CD8-positive, alpha-beta T cell (primary cell): ENCODE measurements at regions of chr1 and their contacts with region 1.

Region 1: DNA sequence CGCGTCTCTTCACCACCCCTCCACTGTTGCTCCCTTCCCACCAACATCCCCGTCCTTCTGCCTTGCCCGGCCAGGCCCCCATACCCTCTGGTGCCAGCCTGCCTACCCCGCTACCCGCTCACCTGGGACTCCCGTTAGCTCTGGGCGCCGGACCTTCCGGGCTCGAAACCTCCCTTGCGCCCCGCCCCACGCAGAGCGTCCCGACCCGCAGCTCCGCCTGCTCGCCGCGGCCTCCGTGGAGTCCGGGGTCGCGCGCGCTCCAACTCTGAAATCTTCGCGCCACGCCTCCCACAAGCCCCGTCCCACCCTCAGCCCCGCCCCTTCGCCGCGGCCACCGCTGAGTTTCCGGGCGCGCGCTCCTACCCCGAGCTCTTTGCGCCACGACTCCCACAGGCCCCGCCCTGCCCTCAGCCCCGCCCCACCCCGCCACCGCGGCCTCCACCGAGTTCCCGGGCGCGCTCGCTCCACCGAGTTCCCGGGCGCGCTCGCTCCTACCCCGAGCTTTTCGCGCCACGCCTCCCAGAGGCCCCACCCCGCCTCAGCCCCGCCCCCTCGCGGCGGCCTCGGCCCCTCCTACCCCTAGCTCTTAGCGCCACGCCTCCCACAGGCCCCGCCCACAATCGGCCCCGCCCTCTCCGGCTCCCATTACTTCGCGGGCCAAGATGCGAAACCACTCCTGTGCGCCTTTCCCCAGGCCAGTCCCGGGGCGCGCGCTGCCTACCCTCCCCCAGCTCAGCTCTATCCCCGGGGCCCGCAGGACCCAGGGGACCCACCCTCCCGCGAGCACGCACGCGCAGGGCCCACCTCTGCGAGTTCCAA is at the start of gene IFT25:
- DNase-seq: peak; percentile 96 to 100 (median 98)
- ATAC-seq: peak; percentile 81
- H3K4me3 ChIP-seq: peak within 1 kb of the TSS; percentile 81 to 94
- H3K4me3 Mint-ChIP-seq: peak within 1 kb of the TSS; percentile 98
- H3K27ac ChIP-seq: peak within 1 kb of the TSS; percentile 58 to 88
- H3K27ac Mint-ChIP-seq: peak within 1 kb of the TSS; percentile 96
- H3K4me1 ChIP-seq: peaks cover 27% of the 10 kb centered on the region
- H3K4me1 Mint-ChIP-seq: peaks cover 57% of the 10 kb centered on the region
- H3K27me3 ChIP-seq: no peaks in the 10 kb centered on the region
- H3K27me3 Mint-ChIP-seq: no peaks in the 10 kb centered on the region
- CTCF ChIP-seq: no peak
- total RNA-seq, gene IFT25: 12.8 to 13.1 TPM

Region 2: DNA sequence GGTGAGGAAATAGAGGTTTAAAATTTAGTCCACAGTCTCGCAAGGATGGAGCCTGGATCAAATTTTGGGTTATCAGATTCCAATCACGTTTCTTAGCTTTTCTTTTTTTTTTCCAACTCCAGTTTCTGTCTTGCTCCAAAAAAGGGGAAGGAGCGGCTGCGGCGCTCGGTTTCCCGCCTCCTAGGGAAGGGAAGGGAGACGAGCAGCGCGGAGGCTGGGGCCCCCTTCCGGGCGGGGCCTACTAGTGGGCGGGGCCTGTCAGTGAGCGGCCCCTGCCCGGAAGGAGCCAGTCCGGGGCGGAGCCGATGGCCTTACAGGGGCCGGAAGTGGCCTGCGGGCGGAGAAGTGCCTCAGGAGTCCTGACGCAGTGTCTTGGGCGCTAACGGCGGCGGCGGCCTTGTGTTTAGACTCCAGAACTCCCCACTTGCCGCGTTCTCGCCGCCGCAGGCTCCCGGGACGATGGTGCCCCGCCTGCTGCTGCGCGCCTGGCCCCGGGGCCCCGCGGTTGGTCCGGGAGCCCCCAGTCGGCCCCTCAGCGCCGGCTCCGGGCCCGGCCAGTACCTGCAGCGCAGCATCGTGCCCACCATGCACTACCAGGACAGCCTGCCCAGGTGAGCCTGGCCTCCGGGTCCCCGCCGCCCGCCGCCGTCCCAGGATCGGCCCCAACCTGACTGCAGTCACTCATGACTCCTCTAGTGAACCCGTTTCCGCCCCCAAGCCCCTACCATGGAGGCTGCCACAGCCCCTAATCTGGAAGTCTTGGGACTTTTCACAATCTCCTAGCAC is 749.0 kb before region 1 on chr1 and contains the start of gene CPT2:
- CTCF ChIA-PET with region 1: no interaction called
- POLR2A ChIA-PET with region 1: no interaction called
- intact Hi-C with region 1: loop called in 1 of 2 experiments (anchors 5 kb)
- DNase-seq: peak; percentile 75 to 95 (median 92)
- ATAC-seq: peak; percentile 94
- H3K4me3 ChIP-seq: peak within 1 kb of the TSS; percentile 79 to 80
- H3K4me3 Mint-ChIP-seq: peak within 1 kb of the TSS; percentile 97
- H3K27ac ChIP-seq: peak within 1 kb of the TSS; percentile 95 to 96
- H3K27ac Mint-ChIP-seq: peak within 1 kb of the TSS; percentile 96
- H3K4me1 ChIP-seq: peaks cover 22% of the 10 kb centered on the region
- H3K4me1 Mint-ChIP-seq: peaks cover 38% of the 10 kb centered on the region
- H3K27me3 ChIP-seq: no peaks in the 10 kb centered on the region
- H3K27me3 Mint-ChIP-seq: no peaks in the 10 kb centered on the region
- CTCF ChIP-seq: no peak
- total RNA-seq, gene CPT2: 7.8 to 8.2 TPM

Region 3: GRCh38 chr1:53326088-53326597 is 619.5 kb before region 1 on chr1:
- CTCF ChIA-PET with region 1: no interaction called
- POLR2A ChIA-PET with region 1: no interaction called
- intact Hi-C with region 1: loop called in 1 of 2 experiments (anchors 2 kb)
- DNase-seq: peak; percentile 78 to 94 (median 92)
- ATAC-seq: peak; percentile 89
- H3K4me3 ChIP-seq: peak overlapping the region; percentile 74 to 82
- H3K4me3 Mint-ChIP-seq: peak overlapping the region; percentile 94
- H3K27ac ChIP-seq: peak overlapping the region; percentile 26 to 66
- H3K27ac Mint-ChIP-seq: peak overlapping the region; percentile 77
- H3K4me1 ChIP-seq: peaks cover 6% of the 10 kb centered on the region
- H3K4me1 Mint-ChIP-seq: peaks cover 16% of the 10 kb centered on the region
- H3K27me3 ChIP-seq: no peaks in the 10 kb centered on the region
- H3K27me3 Mint-ChIP-seq: no peaks in the 10 kb centered on the region
- CTCF ChIP-seq: no peak

Region 4: GRCh38 chr1:53860967-53861411 is 84.7 kb before region 1 on chr1:
- CTCF ChIA-PET with region 1: interaction called, 105 read pairs
- POLR2A ChIA-PET with region 1: interaction called, 3 read pairs
- intact Hi-C with region 1: loop called (anchors 1 to 2 kb)
- DNase-seq: peak in 8 of 9 experiments; percentile 15 to 75 (median 50)
- ATAC-seq: peak; percentile 83
- H3K4me3 ChIP-seq: no peak overlapping the region
- H3K4me3 Mint-ChIP-seq: no peak overlapping the region
- H3K27ac ChIP-seq: no peak overlapping the region
- H3K27ac Mint-ChIP-seq: no peak overlapping the region
- H3K4me1 ChIP-seq: no peaks in the 10 kb centered on the region
- H3K4me1 Mint-ChIP-seq: no peaks in the 10 kb centered on the region
- H3K27me3 ChIP-seq: no peaks in the 10 kb centered on the region
- H3K27me3 Mint-ChIP-seq: no peaks in the 10 kb centered on the region
- CTCF ChIP-seq: peak; percentile 79

Region 5: GRCh38 chr1:53889304-53890298 is 56.0 kb before region 1 on chr1 and contains the start of gene YIPF1:
- CTCF ChIA-PET with region 1: no interaction called
- POLR2A ChIA-PET with region 1: interaction called, 20 read pairs
- intact Hi-C with region 1: loop called (anchors 1 kb)
- DNase-seq: peak; percentile 68 to 92 (median 86)
- ATAC-seq: peak; percentile 98
- H3K4me3 ChIP-seq: peak within 1 kb of the TSS; percentile 69 to 97
- H3K4me3 Mint-ChIP-seq: peak within 1 kb of the TSS; percentile 94
- H3K27ac ChIP-seq: peak within 1 kb of the TSS; percentile 42 to 56
- H3K27ac Mint-ChIP-seq: peak within 1 kb of the TSS; percentile 94
- H3K4me1 ChIP-seq: peaks cover 19% of the 10 kb centered on the region
- H3K4me1 Mint-ChIP-seq: peaks cover 49% of the 10 kb centered on the region
- H3K27me3 ChIP-seq: no peaks in the 10 kb centered on the region
- H3K27me3 Mint-ChIP-seq: no peaks in the 10 kb centered on the region
- CTCF ChIP-seq: no peak
- total RNA-seq, gene YIPF1: 4.6 to 5.4 TPM

Region 6: GRCh38 chr1:53959664-53960250 is 14.1 kb after region 1 on chr1:
- CTCF ChIA-PET with region 1: interaction called, 54 read pairs
- POLR2A ChIA-PET with region 1: interaction called, 5 read pairs
- intact Hi-C with region 1: no loop called
- DNase-seq: peak in 3 of 9 experiments; percentile 17 to 70 (median 60)
- ATAC-seq: peak; percentile 93
- H3K4me3 ChIP-seq: no peak overlapping the region
- H3K4me3 Mint-ChIP-seq: no peak overlapping the region
- H3K27ac ChIP-seq: no peak overlapping the region
- H3K27ac Mint-ChIP-seq: no peak overlapping the region
- H3K4me1 ChIP-seq: no peaks in the 10 kb centered on the region
- H3K4me1 Mint-ChIP-seq: peaks cover 1% of the 10 kb centered on the region
- H3K27me3 ChIP-seq: no peaks in the 10 kb centered on the region
- H3K27me3 Mint-ChIP-seq: no peaks in the 10 kb centered on the region
- CTCF ChIP-seq: peak; percentile 76

Region 7: DNA sequence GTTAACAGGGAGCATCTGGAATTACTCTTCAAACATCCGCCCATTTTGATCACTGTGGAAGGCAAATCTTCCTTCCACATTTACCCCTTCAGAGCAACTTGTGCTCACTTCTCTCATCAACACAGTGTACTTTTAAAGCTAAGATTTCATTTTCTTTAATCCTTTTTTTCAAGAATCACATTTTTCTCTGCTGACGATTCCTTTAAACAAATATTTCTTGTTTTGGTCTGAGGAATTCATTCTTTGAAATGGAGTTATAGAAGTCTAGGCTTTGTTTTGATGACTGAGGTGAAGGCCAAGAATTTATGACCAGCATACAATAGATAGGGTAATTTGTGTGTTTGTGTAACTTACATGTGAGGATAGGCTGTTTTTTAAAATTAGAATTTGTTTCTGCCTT is 26.1 kb after region 1 on chr1:
- CTCF ChIA-PET with region 1: no interaction called
- POLR2A ChIA-PET with region 1: no interaction called
- intact Hi-C with region 1: no loop called
- DNase-seq: no peak
- ATAC-seq: no peak
- H3K4me3 ChIP-seq: no peak overlapping the region
- H3K4me3 Mint-ChIP-seq: no peak overlapping the region
- H3K27ac ChIP-seq: no peak overlapping the region
- H3K27ac Mint-ChIP-seq: no peak overlapping the region
- H3K4me1 ChIP-seq: no peaks in the 10 kb centered on the region
- H3K4me1 Mint-ChIP-seq: no peaks in the 10 kb centered on the region
- H3K27me3 ChIP-seq: no peaks in the 10 kb centered on the region
- H3K27me3 Mint-ChIP-seq: no peaks in the 10 kb centered on the region
- CTCF ChIP-seq: no peak

Region 8: GRCh38 chr1:54764133-54764921 is 818.7 kb after region 1 on chr1 and contains the start of gene PARS2:
- CTCF ChIA-PET with region 1: no interaction called
- POLR2A ChIA-PET with region 1: no interaction called
- intact Hi-C with region 1: loop called in 1 of 2 experiments (anchors 2 kb)
- DNase-seq: peak; percentile 86 to 99 (median 95)
- ATAC-seq: peak; percentile 93
- H3K4me3 ChIP-seq: peak within 1 kb of the TSS; percentile 87 to 97
- H3K4me3 Mint-ChIP-seq: peak within 1 kb of the TSS; percentile 96
- H3K27ac ChIP-seq: peak within 1 kb of the TSS; percentile 62 to 65
- H3K27ac Mint-ChIP-seq: peak within 1 kb of the TSS; percentile 91
- H3K4me1 ChIP-seq: peaks cover 10% of the 10 kb centered on the region
- H3K4me1 Mint-ChIP-seq: peaks cover 20% of the 10 kb centered on the region
- H3K27me3 ChIP-seq: no peaks in the 10 kb centered on the region
- H3K27me3 Mint-ChIP-seq: no peaks in the 10 kb centered on the region
- CTCF ChIP-seq: no peak
- total RNA-seq, gene PARS2: not detected